Mammary epithelial cell (primary cell): ENCODE measurements at regions of chr1 and their contacts with region 1.

Region 1: DNA sequence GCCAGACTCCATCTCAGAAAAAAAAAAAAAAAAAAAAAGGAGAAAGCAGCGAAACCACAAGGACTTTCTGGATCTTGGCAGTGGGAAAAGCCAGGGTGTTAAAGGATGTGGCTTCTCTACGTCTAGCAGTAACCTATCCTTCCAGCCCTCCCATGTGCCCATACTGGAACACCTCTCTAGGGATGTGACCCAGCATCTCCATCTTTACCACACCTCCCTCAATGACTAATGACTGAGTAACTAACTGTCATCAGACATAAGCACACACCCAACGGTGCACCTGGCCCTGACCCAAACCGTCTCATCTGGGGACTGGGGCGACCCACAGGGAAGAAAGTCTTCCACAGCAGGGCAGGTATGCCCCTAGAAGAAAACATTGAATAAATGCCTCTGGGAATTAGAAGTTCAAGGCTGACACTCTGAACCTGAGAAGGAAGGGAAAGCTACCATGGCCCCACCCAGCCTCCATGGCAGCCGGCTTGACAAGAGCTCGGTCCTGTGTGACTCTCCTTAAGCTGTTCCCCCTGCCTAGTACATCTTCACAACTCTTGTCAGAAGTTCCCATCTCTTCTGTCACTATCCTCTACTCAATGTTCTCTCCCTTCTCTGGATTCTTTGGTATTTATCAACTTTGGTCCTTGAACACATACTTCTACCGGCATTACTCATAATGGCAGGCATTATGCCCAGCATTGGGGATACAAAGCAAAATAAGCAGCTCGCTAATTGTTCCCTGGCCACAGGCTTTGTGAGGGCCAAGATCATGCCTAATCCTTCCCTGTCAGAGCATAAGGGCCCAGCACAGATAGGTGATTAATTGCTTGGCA is 14.8 kb upstream of the PAQR6 start:
- DNase-seq: peak; percentile 91
- H3K4me3 ChIP-seq: no peak overlapping the region
- H3K27ac ChIP-seq: peak overlapping the region; percentile 81
- H3K4me1 ChIP-seq: peaks cover 65% of the 10 kb centered on the region
- H3K27me3 ChIP-seq: no peaks in the 10 kb centered on the region
- CTCF ChIP-seq: no peak

Region 2: GRCh38 chr1:156282479-156283222 is 20.0 kb after region 1 on chr1 and contains the start of gene SMG5:
- CTCF ChIA-PET with region 1: no interaction called
- dilution Hi-C with region 1: no loop called
- in situ Hi-C with region 1: no loop called
- intact Hi-C with region 1: loop called (anchors 2 kb)
- DNase-seq: peak; percentile 98
- H3K4me3 ChIP-seq: peak within 1 kb of the TSS; percentile 73 to 93 (median 86)
- H3K27ac ChIP-seq: peak within 1 kb of the TSS; percentile 68
- H3K4me1 ChIP-seq: peaks cover 38% of the 10 kb centered on the region
- H3K27me3 ChIP-seq: no peaks in the 10 kb centered on the region
- CTCF ChIP-seq: no peak
- total RNA-seq, gene SMG5: 74.5 to 76.7 TPM

Region 3: DNA sequence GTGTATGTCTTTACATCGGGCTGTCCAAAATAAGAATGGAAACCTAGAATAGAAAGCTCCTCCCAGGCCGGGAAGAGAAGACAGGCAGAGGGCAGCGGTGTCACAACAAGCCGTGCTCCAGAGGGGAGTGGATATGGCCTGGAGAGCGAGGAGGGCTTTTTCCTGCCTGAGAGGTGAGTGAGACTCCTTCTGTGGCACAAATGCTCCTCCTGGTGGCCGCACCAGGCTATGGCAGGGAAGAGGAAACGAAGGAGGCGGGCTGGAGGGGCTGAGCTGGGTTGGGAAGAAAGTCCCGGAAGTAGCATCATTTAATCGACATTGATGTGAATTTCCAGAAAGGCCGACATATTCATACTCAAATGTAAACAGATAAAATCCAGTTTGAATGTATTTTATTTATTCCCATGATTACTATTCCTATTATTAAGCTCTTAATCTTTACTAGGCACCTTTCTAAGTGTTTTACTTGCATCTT is 183.2 kb after region 1 on chr1:
- CTCF ChIA-PET with region 1: no interaction called
- dilution Hi-C with region 1: no loop called
- in situ Hi-C with region 1: no loop called
- intact Hi-C with region 1: no loop called
- DNase-seq: peak; percentile 73
- H3K4me3 ChIP-seq: no peak overlapping the region
- H3K27ac ChIP-seq: no peak overlapping the region
- H3K4me1 ChIP-seq: peaks cover 4% of the 10 kb centered on the region
- H3K27me3 ChIP-seq: no peaks in the 10 kb centered on the region
- CTCF ChIP-seq: peak; percentile 98 to 99